Activated CD4-positive, alpha-beta T cell treated with anti-CD3 and anti-CD28 coated beads, Interleukin-2, amount 10 ng/mL, durations not matched to agents 7 days and 5 days (primary cell): ENCODE measurements at regions of chr2 and their contacts with region 1.

Region 1: GRCh38 chr2:27723372-27724144 is 48.0 kb upstream of the MRPL33 start:
- DNase-seq: peak; percentile 34
- H3K4me3 Mint-ChIP-seq: no peak overlapping the region
- H3K27ac Mint-ChIP-seq: no peak overlapping the region
- H3K4me1 Mint-ChIP-seq: peaks cover 29% of the 10 kb centered on the region
- H3K27me3 Mint-ChIP-seq: no peaks in the 10 kb centered on the region

Region 2: GRCh38 chr2:27703638-27704341 is 19.8 kb before region 1 on chr2:
- CTCF ChIA-PET with region 1: interaction called, 11 read pairs
- POLR2A ChIA-PET with region 1: no interaction called
- DNase-seq: peak; percentile 89
- H3K4me3 Mint-ChIP-seq: no peak overlapping the region
- H3K27ac Mint-ChIP-seq: peak overlapping the region; percentile 2
- H3K4me1 Mint-ChIP-seq: peaks cover 11% of the 10 kb centered on the region
- H3K27me3 Mint-ChIP-seq: no peaks in the 10 kb centered on the region